Tibial artery (tissue), 4 donors: ENCODE measurements at regions of chr9 and their contacts with region 1.

Region 1: DNA sequence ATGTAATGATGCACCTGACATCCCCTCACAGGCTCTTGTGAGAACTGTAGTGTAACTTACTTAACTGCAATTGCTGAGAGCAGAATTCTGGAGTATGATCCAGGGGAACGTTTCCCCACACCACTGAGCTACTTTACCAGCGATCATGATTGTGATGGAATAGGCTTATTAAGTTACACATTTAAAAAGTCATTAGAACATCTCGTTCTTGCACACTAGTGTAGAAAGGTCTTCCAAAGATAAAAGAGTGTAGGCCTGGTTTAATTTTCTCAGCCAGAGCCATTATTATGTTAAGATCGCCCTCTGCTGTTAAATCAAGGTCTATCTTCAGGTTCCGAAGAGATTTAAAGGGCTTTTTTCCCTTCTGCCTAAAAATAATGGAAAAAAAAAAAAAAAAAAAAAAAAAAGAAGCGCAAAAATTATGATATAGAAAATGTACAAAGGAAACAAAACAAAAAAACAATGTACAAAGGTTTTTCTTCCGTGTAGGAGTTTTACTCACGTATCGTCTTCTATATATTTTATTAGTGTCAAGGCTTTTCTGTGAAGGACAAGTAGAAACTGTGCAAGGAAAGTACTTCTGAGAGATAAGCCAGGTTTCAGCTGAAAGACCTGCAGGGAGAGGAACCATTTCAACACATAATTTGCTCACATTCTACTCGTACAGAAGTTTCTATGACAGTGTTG is 18.6 kb upstream of the MOB3B start:
- DNase-seq: no peak
- H3K4me3 ChIP-seq: no peak overlapping the region
- H3K27ac ChIP-seq: no peak overlapping the region
- H3K4me1 ChIP-seq: peaks cover 0 to 4% (median 0%) of the 10 kb centered on the region in 4 donors
- H3K27me3 ChIP-seq: no peaks in the 10 kb centered on the region
- CTCF ChIP-seq: peak; percentile 41 to 72

Region 2: DNA sequence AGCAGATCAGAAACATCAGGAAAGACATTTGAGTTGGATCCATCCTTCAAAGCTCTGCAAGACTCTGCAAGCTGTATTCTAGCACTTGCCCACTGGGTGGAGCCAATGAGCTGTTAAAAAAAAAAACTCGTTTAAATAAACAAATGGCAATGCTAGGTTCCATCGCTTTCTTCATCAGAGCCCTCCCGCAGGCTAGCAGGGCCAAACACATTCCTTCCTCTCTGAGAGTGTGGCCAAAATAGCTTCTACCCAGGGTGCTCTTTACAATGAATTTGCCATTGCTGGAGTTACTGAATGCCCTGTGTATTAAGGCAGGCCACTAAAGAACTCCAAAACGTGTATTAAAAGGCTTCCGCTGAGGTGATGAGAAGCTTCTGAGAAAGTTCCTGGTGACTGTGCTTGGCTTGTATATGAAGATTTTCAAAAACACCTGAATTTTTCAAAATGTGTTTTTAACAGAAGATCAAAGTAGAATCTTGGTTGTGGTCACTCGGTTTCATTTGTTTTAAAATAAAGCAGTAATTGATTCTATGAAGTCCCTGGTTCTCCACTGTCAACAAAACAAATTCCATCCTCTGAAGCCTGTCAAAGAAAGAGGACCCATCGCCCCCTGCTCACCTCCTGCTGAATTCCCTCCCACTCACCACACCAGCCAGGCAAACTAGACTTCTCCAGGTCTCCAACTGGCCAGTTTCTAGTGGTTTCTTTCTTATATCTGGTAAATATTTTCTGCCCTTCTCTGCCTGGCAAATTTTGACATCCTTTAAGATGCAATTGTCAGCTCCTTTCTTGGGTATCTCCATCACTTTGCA is 214.8 kb before region 1 on chr9:
- intact Hi-C with region 1: loop called (anchors 2 kb)
- DNase-seq: peak; percentile 70 to 84
- H3K4me3 ChIP-seq: no peak overlapping the region
- H3K27ac ChIP-seq: peak overlapping the region in 1 of 2 donors; percentile 2
- H3K4me1 ChIP-seq: peaks cover 6 to 29% (median 23%) of the 10 kb centered on the region in 4 donors
- H3K27me3 ChIP-seq: no peaks in the 10 kb centered on the region
- CTCF ChIP-seq: peak; percentile 87 to 91

Region 3: GRCh38 chr9:27407986-27408385 is 140.2 kb before region 1 on chr9:
- intact Hi-C with region 1: no loop called
- DNase-seq: no peak
- H3K4me3 ChIP-seq: no peak overlapping the region
- H3K27ac ChIP-seq: no peak overlapping the region
- H3K4me1 ChIP-seq: peaks cover 0 to 15% (median 4%) of the 10 kb centered on the region in 4 donors
- H3K27me3 ChIP-seq: no peaks in the 10 kb centered on the region
- CTCF ChIP-seq: no peak